Panc1 (cell line): ENCODE measurements at regions of chr20 and their contacts with region 1.

Region 1: DNA sequence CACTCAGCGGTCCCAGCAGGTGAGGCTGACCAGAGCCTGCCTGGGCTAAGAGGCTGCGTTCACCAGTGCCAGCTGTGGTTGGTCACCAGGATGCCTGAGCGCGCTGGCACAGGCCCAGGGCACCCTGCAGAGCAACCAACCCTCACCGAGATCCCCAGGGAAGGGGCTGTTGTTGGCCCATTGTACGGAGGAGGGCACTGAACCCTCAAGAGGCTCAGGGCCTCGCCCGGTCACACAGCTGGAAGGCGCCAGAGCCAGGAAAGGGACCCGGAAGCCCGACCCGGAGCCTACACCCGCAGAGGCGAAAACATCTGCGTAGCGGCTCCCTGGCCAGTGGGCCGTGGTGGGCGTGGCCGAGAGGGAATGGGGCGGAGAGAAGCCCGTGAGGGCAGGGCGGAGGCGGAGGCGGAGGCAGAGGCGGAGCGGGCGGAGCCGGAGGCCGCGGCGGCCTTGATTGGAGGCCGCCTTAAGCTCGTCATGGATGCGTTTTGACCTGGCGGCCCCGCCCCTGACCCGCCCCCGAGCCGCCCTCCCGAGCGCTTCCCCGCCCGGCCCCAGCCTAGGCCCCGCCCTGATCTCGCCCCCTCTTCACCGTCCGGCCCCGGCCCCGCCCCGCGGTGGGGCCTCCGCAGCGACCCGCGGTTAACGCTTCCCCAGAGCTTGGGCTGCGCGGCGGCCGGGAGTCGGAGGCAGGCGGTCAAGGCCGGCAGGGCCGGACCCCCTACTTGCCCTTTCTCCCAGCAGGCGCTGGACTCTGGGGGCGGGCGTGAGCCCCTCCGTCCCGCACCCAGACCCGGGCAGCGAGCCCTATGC is 2.2 kb upstream of the MRGBP start:
- DNase-seq: peak; percentile 52
- ATAC-seq: peak; percentile 83
- H3K4me3 ChIP-seq: peak overlapping the region; percentile 51 to 73
- H3K27ac ChIP-seq: peak overlapping the region; percentile 87
- H3K4me1 ChIP-seq: peaks cover 22% of the 10 kb centered on the region
- H3K27me3 ChIP-seq: no peaks in the 10 kb centered on the region
- CTCF ChIP-seq: no peak

Region 2: DNA sequence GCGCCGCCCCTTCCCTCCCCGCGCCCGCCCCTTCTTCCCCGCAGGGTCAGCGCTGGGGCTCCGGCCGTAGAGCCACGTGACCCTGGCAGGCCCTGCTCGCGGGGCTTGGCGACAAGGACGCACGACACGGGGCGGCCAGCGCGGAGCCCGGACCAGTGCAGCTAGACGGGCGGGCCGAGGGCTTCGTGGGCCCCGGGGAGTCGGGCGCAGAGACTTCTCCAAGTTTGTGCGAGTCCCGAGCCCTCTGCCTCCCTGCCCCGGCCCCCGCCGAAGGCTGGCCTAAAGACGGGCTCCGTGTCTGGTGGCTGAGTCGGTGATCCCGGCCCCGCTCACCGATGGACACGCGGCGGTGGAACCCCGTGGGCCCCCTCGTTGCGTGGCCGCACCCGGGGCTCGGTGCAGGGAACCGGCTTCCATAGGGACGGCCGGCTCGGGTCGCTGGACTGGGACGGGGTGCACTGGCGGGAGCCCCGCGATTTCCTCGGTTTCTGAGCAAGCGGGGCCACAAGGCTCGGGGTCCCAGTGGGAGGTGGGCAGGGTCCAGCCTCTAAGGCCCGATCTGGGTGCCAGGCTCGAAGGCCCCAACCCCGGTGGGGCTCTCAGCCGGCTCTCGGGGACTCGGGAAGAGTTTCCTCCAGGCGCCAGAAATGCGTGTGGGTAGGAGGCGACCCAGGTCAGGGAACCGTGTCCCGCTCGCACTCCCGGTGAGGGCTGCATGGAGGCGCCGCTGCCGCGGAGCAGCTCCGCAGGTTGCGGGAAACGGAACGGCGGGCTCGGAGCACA is 317.9 kb before region 1 on chr20:
- CTCF ChIA-PET with region 1: interaction called, 8 read pairs
- POLR2A ChIA-PET with region 1: interaction called, 3 read pairs
- in situ Hi-C with region 1: no loop called
- intact Hi-C with region 1: loop called (anchors 10 kb)
- DNase-seq: no peak
- ATAC-seq: peak; percentile 67
- H3K4me3 ChIP-seq: peak overlapping the region; percentile 46 to 76
- H3K27ac ChIP-seq: peak overlapping the region; percentile 95
- H3K4me1 ChIP-seq: peaks cover 37% of the 10 kb centered on the region
- H3K27me3 ChIP-seq: no peaks in the 10 kb centered on the region
- CTCF ChIP-seq: no peak

Region 3: DNA sequence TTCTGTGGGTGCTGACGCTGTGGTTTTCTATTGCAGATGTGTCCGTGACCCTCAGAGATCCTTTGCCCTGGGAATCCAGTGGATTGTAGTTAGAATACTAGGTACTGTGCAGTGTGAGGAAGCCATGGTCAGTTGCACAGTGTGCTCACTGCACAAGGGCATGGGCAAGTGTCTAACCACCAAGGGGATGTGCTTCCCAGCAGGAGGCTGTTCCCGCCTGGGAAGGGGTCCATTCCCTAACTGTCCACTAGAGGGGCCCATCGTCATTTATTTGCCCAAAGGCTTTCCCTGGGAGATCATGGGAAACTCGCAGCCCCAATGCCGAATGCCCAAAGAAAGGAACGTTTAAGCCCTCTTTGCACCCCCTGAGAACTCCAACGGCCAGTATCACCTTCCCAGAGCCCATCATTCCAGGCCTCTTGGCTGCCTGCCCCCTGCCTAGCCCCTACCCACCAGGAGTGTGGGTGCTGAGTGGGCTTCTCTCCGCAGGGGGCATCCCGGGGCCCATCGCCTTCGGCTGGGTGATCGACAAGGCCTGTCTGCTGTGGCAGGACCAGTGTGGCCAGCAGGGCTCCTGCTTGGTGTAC is 125.6 kb before region 1 on chr20:
- CTCF ChIA-PET with region 1: interaction called, 5 read pairs
- POLR2A ChIA-PET with region 1: interaction called, 4 read pairs
- in situ Hi-C with region 1: no loop called
- intact Hi-C with region 1: loop called (anchors 2 kb)
- DNase-seq: peak; percentile 30
- ATAC-seq: peak; percentile 52
- H3K4me3 ChIP-seq: no peak overlapping the region
- H3K27ac ChIP-seq: peak overlapping the region; percentile 39; the same call in 1 of the 2 replicates
- H3K4me1 ChIP-seq: peaks cover 52% of the 10 kb centered on the region
- H3K27me3 ChIP-seq: no peaks in the 10 kb centered on the region
- CTCF ChIP-seq: no peak; the same call in 1 of the 2 replicates

Region 4: GRCh38 chr20:62704301-62704948 is 89.7 kb before region 1 on chr20:
- CTCF ChIA-PET with region 1: interaction called, 13 read pairs
- POLR2A ChIA-PET with region 1: no interaction called
- in situ Hi-C with region 1: no loop called
- intact Hi-C with region 1: loop called (anchors 2 kb)
- DNase-seq: peak; percentile 77
- ATAC-seq: peak; percentile 44
- H3K4me3 ChIP-seq: peak overlapping the region in 1 of 2 experiments; percentile 32; a peak in 2 of 4 replicates
- H3K27ac ChIP-seq: peak overlapping the region; percentile 91
- H3K4me1 ChIP-seq: peaks cover 70% of the 10 kb centered on the region
- H3K27me3 ChIP-seq: no peaks in the 10 kb centered on the region
- CTCF ChIP-seq: peak; percentile 26; the same call in 1 of the 2 replicates

Region 5: DNA sequence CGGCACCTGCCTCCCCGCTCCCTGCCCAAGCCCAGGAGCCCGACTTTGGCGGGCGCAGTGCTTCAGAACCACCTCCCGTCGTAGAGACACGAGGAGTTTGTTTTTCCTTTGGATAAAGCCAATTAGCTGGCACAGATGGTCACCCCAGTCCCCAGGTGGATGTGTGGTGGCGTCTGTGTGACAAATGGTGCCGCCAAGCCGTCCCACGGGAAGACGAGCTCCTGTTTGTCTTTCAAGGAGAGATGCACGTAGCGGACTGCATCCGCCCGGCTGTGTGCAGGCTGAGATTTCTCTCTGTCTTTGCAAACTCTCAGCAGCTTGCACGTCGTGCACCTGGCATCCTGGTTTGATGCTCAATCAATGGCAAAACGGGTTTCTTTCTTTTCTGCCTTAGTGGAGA is 13.9 kb before region 1 on chr20:
- CTCF ChIA-PET with region 1: interaction called, 11 read pairs
- POLR2A ChIA-PET with region 1: no interaction called
- in situ Hi-C with region 1: no loop called
- intact Hi-C with region 1: no loop called
- DNase-seq: no peak
- ATAC-seq: no peak
- H3K4me3 ChIP-seq: no peak overlapping the region
- H3K27ac ChIP-seq: no peak overlapping the region
- H3K4me1 ChIP-seq: no peaks in the 10 kb centered on the region; the same call in 1 of the 2 replicates
- H3K27me3 ChIP-seq: no peaks in the 10 kb centered on the region
- CTCF ChIP-seq: no peak

Region 6: GRCh38 chr20:62921119-62921687 is 127.1 kb after region 1 on chr20:
- CTCF ChIA-PET with region 1: no interaction called
- POLR2A ChIA-PET with region 1: no interaction called
- in situ Hi-C with region 1: no loop called
- intact Hi-C with region 1: no loop called
- DNase-seq: no peak
- ATAC-seq: peak; percentile 71
- H3K4me3 ChIP-seq: no peak overlapping the region
- H3K27ac ChIP-seq: peak overlapping the region; percentile 21; the same call in 1 of the 2 replicates
- H3K4me1 ChIP-seq: peaks cover 77% of the 10 kb centered on the region
- H3K27me3 ChIP-seq: no peaks in the 10 kb centered on the region
- CTCF ChIP-seq: peak; percentile 77